ENCODE measurements at regions of chr6 and their contacts with region 1.

Region 1: DNA sequence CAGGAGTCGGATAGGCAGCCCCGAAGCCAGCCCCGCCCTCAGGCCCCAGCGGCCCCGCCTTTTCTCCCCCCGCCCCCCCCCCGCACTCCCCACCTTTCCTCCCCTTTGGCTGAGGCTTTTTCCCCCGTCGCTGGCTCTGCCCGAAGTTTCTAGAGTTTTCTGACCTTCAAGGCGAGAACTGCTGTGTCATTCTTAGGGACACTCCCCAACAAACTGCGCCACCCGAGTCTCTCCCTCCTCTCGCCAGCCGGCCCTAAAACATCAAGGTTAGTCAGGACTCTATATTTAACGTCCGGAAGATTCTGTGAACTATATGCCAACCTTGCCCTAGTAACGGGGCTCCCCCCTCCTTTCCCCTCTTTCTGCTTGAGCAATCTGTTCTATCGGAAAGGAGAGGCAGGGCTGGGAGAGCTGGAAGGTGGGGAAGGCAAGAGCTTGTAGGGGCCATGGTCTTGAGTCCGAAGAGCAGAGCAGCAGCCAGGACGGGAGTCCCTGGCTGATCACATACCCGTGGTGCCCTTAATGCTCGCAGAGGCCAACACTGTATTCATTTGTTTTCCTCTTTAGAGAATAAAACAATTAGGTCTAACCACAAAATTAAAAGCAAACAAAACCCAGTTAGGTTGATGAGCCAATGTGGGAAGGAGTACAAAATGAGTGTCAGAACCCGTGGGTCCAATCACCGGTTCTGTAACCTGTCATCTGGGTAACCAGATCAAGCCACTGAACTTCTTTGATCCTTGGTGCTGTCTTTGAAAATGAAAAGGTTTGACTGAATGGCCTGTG is 5.3 kb upstream of the HSPA1B start:
- DNase-seq: peak; percentile 93
- H3K4me3 Mint-ChIP-seq: peak overlapping the region; percentile 89
- H3K27ac Mint-ChIP-seq: peak overlapping the region; percentile 95
- H3K4me1 Mint-ChIP-seq: peaks cover 64% of the 10 kb centered on the region
- H3K27me3 Mint-ChIP-seq: peaks cover 5% of the 10 kb centered on the region
- CTCF ChIP-seq: no peak

Region 2: DNA sequence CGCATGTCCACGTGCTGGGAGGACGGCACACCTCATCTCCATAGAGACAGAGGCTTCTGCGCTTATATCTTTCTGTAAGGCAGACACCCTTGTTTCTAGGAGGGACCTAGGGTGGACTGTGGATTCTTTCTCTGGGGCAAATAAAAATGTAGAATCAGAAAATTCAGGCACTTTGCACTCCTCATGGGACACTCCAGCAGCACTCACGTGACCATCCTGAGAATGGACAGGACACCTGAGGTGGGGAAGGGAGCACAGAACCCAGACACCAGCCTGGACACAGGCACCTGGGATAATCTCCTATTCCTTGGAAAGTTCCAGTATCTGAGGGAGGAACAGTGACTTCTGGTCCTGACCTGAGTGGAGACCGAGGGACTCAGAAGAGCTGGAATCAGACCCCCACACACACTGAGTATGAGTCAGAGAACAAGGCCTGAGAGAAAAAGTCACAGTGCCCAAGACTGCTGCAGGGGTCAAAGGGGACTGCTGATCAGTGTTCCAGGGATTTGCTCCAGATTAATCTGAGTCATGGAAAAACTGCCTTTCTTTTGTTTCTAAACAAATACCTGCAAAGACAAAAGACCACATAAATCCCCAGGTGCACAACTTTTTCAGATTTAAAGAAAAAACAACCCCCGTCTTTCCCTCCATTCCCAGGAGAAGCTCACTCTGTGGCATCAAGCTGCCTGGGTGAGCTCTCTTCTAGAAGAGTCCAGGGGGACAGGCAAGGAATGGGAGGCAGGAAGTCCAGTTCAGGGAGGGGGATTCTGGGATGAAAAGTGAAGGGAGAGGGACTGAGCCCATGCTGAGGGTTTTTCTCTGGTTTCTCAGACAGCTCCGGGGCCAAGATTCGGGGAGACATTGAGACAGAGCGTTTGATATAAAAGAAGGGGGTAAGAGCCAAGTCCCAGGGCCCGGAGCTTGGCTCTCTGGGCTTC is 359.9 kb before region 1 on chr6:
- CTCF ChIA-PET with region 1: no interaction called
- intact Hi-C with region 1: no loop called
- DNase-seq: no peak
- H3K4me3 Mint-ChIP-seq: peak overlapping the region; percentile 78
- H3K27ac Mint-ChIP-seq: peak overlapping the region; percentile 74
- H3K4me1 Mint-ChIP-seq: peaks cover 21% of the 10 kb centered on the region
- H3K27me3 Mint-ChIP-seq: peaks cover 25% of the 10 kb centered on the region
- CTCF ChIP-seq: no peak

Region 3: GRCh38 chr6:31680840-31681671 is 141.2 kb before region 1 on chr6 and contains the start of gene LY6G5C:
- CTCF ChIA-PET with region 1: no interaction called
- intact Hi-C with region 1: no loop called
- DNase-seq: peak; percentile 94
- H3K4me3 Mint-ChIP-seq: peak within 1 kb of the TSS; percentile 75
- H3K27ac Mint-ChIP-seq: peak within 1 kb of the TSS; percentile 89
- H3K4me1 Mint-ChIP-seq: peaks cover 28% of the 10 kb centered on the region
- H3K27me3 Mint-ChIP-seq: no peaks in the 10 kb centered on the region
- CTCF ChIP-seq: peak; percentile 83
- total RNA-seq, gene LY6G5C: 4.9 and 5.4 TPM in 2 replicates

Region 4: GRCh38 chr6:31806465-31807272 is 15.6 kb before region 1 on chr6 and contains the start of gene LSM2:
- CTCF ChIA-PET with region 1: interaction called, 13 read pairs
- intact Hi-C with region 1: no loop called
- DNase-seq: peak; percentile 100
- H3K4me3 Mint-ChIP-seq: peak within 1 kb of the TSS; percentile 99
- H3K27ac Mint-ChIP-seq: peak within 1 kb of the TSS; percentile 96
- H3K4me1 Mint-ChIP-seq: peaks cover 19% of the 10 kb centered on the region
- H3K27me3 Mint-ChIP-seq: no peaks in the 10 kb centered on the region
- CTCF ChIP-seq: peak; percentile 89
- total RNA-seq, gene LSM2: 126 and 144 TPM in 2 replicates

Region 5: DNA sequence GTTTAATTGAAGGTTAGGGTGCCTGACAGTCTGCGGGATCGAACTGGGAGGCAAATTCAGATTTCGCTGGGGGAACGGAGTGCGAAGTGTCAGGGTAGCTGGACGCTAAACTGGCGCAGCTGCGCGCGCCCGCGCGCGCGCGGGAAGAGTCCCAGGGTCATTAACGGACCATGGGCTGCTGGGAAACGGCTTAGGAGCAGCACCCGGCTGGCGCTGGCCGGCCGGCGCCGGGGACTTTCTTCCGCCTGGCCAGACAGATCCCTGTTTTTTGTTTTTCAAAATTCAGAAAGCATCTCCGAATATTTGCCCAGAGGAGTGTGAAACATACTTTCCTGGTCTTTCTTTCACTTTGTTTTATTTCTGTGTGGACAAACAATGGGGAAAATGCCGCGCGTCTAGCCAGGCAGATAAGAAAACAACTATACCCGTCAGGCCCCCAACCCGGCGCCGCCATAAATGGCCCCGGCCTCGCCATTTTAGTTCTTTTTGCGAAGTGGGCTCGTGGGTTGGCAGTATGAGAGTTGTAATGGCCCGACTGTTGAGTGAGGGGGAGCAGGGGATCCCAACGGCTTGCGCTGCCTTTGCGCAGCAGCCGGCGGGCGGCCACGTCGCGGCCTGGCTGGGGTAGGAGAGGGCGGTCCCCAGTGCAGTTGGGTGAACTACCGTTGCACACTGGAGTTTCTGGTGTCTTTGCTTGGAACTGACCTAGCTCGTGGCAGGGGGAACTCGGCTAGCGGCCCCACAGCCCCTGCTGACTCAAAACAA is 12.4 kb after region 1 on chr6:
- CTCF ChIA-PET with region 1: interaction called, 7 read pairs
- intact Hi-C with region 1: loop called (anchors 2 kb)
- DNase-seq: peak; percentile 96
- H3K4me3 Mint-ChIP-seq: peak overlapping the region; percentile 89
- H3K27ac Mint-ChIP-seq: peak overlapping the region; percentile 99
- H3K4me1 Mint-ChIP-seq: peaks cover 39% of the 10 kb centered on the region
- H3K27me3 Mint-ChIP-seq: no peaks in the 10 kb centered on the region
- CTCF ChIP-seq: no peak

Measured in Calu3 (cell line).